Posterior cingulate gyrus (tissue), 11 donors: ENCODE measurements at regions of chr4 and their contacts with region 1.

Region 1: GRCh38 chr4:94406668-94407437 is 44.9 kb upstream of the PDLIM5 start:
- DNase-seq: peak in 8 of 10 donors; percentile 50 to 89 (median 66)

Region 2: GRCh38 chr4:93628501-93628900 is 778.4 kb before region 1 on chr4:
- intact Hi-C with region 1: no loop called
- DNase-seq: no peak

Region 3: GRCh38 chr4:94304365-94304971 is 102.4 kb before region 1 on chr4:
- intact Hi-C with region 1: loop called (anchors 10 kb)
- DNase-seq: no peak

Region 4: GRCh38 chr4:94451695-94452475 is 45.0 kb after region 1 on chr4 and contains the start of gene PDLIM5:
- intact Hi-C with region 1: loop called (anchors 2 kb)
- DNase-seq: peak; percentile 77 to 98 (median 86)

Region 5: DNA sequence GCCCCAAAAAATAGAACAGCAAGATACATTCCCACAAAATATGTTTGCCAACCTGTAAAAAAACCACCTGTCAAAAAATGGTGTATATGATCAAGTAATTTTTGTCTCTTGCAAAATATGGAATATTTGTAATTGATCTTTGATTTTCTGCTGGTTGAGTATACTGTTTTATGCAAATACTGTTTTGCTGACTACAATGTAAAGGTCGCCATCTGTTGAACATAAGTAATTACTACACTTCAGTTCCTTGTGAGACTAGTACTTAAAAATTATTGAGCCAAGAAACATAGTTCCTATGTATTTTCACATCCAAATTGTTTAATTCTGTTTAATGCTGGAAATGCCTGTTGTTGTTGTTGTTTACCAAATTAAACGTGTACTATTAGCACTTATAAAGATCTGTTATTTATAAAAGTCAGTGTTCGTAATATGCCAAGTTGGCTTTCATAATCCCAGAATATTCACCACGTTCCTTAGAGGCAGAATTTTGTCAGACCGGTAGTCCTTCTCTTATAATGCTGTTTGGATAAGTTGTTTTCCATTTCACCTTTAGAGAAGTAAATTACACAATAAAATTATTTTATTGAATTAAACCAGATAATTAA is 189.1 kb after region 1 on chr4:
- intact Hi-C with region 1: loop called (anchors 2 kb)
- DNase-seq: no peak

Region 6: GRCh38 chr4:94690851-94691254 is 284.0 kb after region 1 on chr4:
- intact Hi-C with region 1: no loop called
- DNase-seq: no peak